ENCODE measurements at regions of chr3 and their contacts with region 1.

Region 1: GRCh38 chr3:129824926-129825541 is 68.5 kb downstream of the TMCC1 start:
- DNase-seq: no peak
- H3K4me3 ChIP-seq: no peak overlapping the region
- H3K27ac ChIP-seq: no peak overlapping the region
- H3K4me1 ChIP-seq: peaks cover 0 to 2% (median 0%) of the 10 kb centered on the region in 3 donors
- H3K27me3 ChIP-seq: no peaks in the 10 kb centered on the region
- CTCF ChIP-seq: peak; percentile 62 to 79 (median 74)
- POLR2A ChIP-seq: no peak

Region 2: GRCh38 chr3:129490242-129491045 is 334.6 kb before region 1 on chr3:
- intact Hi-C with region 1: loop called (anchors 10 kb)
- DNase-seq: no peak
- H3K4me3 ChIP-seq: no peak overlapping the region
- H3K27ac ChIP-seq: peak overlapping the region; percentile 55 to 82 (median 76)
- H3K4me1 ChIP-seq: peaks cover 6 to 42% (median 24%) of the 10 kb centered on the region in 3 donors
- H3K27me3 ChIP-seq: no peaks in the 10 kb centered on the region
- CTCF ChIP-seq: peak; percentile 78 to 87 (median 85)
- POLR2A ChIP-seq: peak in 1 of 4 donors; percentile 35

Region 3: GRCh38 chr3:129645290-129645689 is 179.7 kb before region 1 on chr3:
- intact Hi-C with region 1: loop called (anchors 5 kb)
- DNase-seq: no peak
- H3K4me3 ChIP-seq: no peak overlapping the region
- H3K27ac ChIP-seq: no peak overlapping the region
- H3K4me1 ChIP-seq: peaks cover 0 to 15% (median 0%) of the 10 kb centered on the region in 3 donors
- H3K27me3 ChIP-seq: no peaks in the 10 kb centered on the region
- CTCF ChIP-seq: no peak
- POLR2A ChIP-seq: no peak

Region 4: GRCh38 chr3:129934234-129935123 is 109.4 kb after region 1 on chr3:
- intact Hi-C with region 1: loop called (anchors 10 kb)
- DNase-seq: no peak
- H3K4me3 ChIP-seq: peak overlapping the region in 1 of 4 donors; percentile 47
- H3K27ac ChIP-seq: no peak overlapping the region
- H3K4me1 ChIP-seq: peaks cover 0 to 11% (median 5%) of the 10 kb centered on the region in 3 donors
- H3K27me3 ChIP-seq: no peaks in the 10 kb centered on the region
- CTCF ChIP-seq: peak; percentile 83 to 96 (median 87)
- POLR2A ChIP-seq: no peak

Region 5: GRCh38 chr3:129950318-129951046 is 125.4 kb after region 1 on chr3:
- intact Hi-C with region 1: no loop called
- DNase-seq: no peak
- H3K4me3 ChIP-seq: no peak overlapping the region
- H3K27ac ChIP-seq: no peak overlapping the region
- H3K4me1 ChIP-seq: no peaks in the 10 kb centered on the region
- H3K27me3 ChIP-seq: peaks cover 0 to 24% (median 0%) of the 10 kb centered on the region in 4 donors
- CTCF ChIP-seq: no peak
- POLR2A ChIP-seq: no peak